Activated T-helper 2 cell treated with anti-CD3 and anti-CD28 coated beads, Interferon-gamma antibody, Interleukin-2, Interleukin-4, amounts not matched to agents 10 μg/mL and 5 μg/mL and 100 μg/mL, durations not matched to agents 14 hours and 24 hours and 36 hours (primary cell): ENCODE measurements at regions of chr15 and their contacts with region 1.

Region 1: DNA sequence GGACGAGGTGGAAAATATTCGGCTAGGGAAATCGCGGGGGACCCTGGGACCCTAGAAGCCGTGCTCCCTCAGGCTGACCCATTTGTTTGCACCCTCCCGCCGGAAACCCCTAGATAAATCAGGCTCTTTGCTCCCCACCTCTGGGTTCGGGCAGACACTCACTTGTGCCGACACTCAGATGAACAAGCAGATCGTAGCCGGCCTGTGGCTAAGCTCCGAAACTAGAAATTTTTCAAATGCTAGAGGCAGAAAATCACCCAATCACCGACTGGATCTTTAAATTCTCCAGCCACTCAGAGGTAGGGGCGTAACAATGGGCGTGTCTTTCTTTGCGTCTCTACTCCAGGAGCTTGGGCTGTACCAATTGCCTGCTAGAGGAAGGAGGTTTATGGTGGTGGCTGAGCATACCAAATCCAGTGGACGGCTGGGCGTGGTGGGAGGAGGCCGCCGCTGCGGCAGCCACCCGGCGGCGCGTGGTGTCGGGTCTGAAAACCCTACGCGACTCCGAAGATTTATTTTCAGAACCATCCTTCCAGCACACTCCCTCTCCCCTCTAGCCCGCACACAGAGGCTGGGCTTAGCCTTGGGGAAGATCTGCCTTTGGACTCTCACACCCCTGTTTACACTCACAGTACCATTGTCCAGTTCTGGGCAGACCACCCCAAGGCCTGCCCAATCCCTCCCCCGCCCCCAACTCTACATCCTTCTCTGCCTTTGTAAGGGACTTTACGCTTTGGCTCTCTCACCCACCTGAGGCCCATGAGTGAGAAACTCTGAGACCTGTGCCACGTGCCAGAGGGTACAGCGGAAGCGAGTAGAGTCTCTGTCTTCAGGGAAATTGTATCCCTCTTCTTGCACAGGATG is at the start of gene PIF1:
- DNase-seq: peak; percentile 93
- H3K4me3 Mint-ChIP-seq: peak within 1 kb of the TSS; percentile 94
- H3K27ac Mint-ChIP-seq: peak within 1 kb of the TSS; percentile 88
- H3K4me1 Mint-ChIP-seq: peaks cover 34% of the 10 kb centered on the region
- H3K27me3 Mint-ChIP-seq: no peaks in the 10 kb centered on the region
- total RNA-seq, gene PIF1: 28.1 and 29.2 TPM in 2 replicates

Region 2: GRCh38 chr15:64162870-64163658 is 662.6 kb before region 1 on chr15 and contains the start of gene PPIB:
- intact Hi-C with region 1: no loop called
- DNase-seq: peak; percentile 98
- H3K4me3 Mint-ChIP-seq: peak within 1 kb of the TSS; percentile 89
- H3K27ac Mint-ChIP-seq: peak within 1 kb of the TSS; percentile 97
- H3K4me1 Mint-ChIP-seq: peaks cover 40% of the 10 kb centered on the region
- H3K27me3 Mint-ChIP-seq: no peaks in the 10 kb centered on the region
- total RNA-seq, gene PPIB: 457 and 465 TPM in 2 replicates

Region 3: DNA sequence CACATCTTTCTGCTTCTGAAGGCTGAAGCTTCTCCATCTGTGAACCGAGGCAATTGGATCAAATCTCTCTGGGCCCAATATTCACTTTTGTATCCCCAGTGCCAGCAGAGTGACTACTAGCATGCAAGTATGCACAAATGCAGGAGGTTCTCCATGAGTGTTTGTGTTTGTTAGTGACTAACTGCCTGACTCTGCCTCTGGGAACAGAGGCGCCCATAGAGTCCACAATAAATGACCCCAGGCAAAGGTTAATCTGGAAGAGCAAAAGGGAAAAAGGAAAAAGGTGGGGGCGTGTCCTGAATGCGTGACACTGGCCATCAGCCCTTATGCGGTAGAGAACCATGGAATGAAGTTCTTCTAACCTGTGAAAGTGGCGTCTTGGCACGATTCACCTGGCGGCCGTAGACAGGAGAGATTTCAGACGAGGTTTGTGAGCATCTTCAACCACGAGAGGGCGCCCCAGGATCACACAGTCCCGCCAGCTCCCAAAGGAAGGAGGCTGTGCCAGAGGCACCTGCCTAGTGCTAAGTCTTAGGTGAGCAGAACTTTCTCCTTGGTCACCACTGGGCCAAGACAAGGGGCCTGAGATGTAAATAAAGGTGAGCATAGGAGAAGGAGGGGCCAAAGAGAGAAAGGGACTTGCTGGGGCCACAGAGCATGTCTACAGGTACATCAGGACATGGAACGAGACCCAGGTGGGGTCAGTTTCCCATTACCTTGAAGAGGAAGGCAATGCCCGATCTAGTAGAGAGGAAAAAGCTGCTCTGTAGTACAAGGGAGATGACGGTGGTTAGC is 94.5 kb before region 1 on chr15:
- intact Hi-C with region 1: no loop called
- DNase-seq: peak; percentile 72
- H3K4me3 Mint-ChIP-seq: no peak overlapping the region
- H3K27ac Mint-ChIP-seq: no peak overlapping the region
- H3K4me1 Mint-ChIP-seq: peaks cover 10% of the 10 kb centered on the region
- H3K27me3 Mint-ChIP-seq: peaks cover 2% of the 10 kb centered on the region

Region 4: DNA sequence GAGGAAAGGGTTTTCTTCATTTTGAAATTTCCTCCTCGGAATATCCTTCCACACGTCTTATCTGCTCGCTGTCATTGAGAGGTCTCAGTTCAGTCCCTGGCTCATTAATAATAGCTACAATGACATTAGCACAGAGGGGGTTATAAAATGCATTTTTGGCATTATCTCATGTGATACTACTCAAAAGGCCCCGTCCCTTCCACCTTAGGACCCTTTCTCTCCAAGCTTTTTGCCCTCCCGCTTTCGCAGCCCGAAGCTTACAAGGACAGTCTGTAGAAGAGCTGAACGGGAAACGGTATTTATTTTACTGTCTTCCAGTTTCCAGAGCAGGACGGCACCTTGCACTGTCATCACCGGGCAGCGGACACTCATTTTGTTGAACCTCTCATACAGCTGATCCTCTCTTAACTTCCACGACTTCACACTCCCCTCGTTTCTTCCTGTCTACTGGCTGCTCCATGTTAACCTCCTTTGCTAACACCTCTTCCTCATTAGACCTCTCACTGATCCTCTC is 10.4 kb after region 1 on chr15:
- intact Hi-C with region 1: loop called (anchors 1 kb)
- DNase-seq: no peak
- H3K4me3 Mint-ChIP-seq: peak overlapping the region; percentile 62
- H3K27ac Mint-ChIP-seq: peak overlapping the region; percentile 34
- H3K4me1 Mint-ChIP-seq: peaks cover 34% of the 10 kb centered on the region
- H3K27me3 Mint-ChIP-seq: no peaks in the 10 kb centered on the region

Region 5: GRCh38 chr15:64841258-64842095 is 15.8 kb after region 1 on chr15 and contains the start of gene PLEKHO2:
- intact Hi-C with region 1: loop called (anchors 2 kb)
- DNase-seq: peak; percentile 92
- H3K4me3 Mint-ChIP-seq: peak within 1 kb of the TSS; percentile 95
- H3K27ac Mint-ChIP-seq: peak within 1 kb of the TSS; percentile 83
- H3K4me1 Mint-ChIP-seq: peaks cover 49% of the 10 kb centered on the region
- H3K27me3 Mint-ChIP-seq: no peaks in the 10 kb centered on the region
- total RNA-seq, gene PLEKHO2: 15.3 and 17.0 TPM in 2 replicates

Region 6: GRCh38 chr15:64893481-64894394 is 68.1 kb after region 1 on chr15:
- intact Hi-C with region 1: loop called (anchors 1 kb)
- DNase-seq: peak; percentile 97
- H3K4me3 Mint-ChIP-seq: peak overlapping the region; percentile 86
- H3K27ac Mint-ChIP-seq: peak overlapping the region; percentile 96
- H3K4me1 Mint-ChIP-seq: peaks cover 62% of the 10 kb centered on the region
- H3K27me3 Mint-ChIP-seq: no peaks in the 10 kb centered on the region

Region 7: DNA sequence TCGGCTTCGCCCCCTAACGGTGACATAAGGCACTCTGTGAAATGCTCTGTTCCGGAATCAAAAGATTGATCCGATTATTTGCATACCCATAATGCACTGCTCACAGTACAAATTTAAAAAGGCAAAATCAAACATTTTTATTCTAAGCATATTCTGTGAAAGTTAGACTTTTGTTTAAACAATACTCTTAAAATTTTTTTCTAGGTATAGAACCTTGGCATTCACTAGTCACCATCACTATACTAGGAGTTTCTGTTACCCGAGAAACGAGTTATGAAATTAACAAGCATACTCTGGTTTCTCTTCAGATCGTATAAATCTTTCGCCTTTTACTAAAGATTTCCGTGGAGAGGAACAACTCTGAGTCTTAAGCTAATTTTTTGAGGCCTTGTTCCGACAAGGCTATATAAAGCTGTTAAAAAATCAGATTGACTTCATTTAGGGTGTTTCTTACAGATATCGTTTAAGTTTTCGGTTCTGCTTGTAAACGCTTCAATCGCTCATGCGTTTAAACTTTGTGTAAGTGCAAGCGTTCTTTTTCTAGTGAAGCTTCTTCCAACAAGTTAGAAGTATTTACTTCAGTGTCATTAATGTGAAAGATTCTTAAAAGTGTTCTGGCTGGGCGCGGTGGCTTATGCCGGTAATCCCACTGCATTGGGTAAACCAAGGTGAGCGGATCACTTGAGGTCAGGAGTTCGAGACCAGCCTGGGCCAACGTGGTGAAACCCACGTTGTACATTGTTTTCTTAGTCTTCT is 478.9 kb after region 1 on chr15 and contains the start of gene RNU5B-1:
- intact Hi-C with region 1: loop called (anchors 10 kb)
- DNase-seq: peak; percentile 85
- H3K4me3 Mint-ChIP-seq: peak within 1 kb of the TSS; percentile 87
- H3K27ac Mint-ChIP-seq: peak within 1 kb of the TSS; percentile 96
- H3K4me1 Mint-ChIP-seq: peaks cover 22% of the 10 kb centered on the region
- H3K27me3 Mint-ChIP-seq: no peaks in the 10 kb centered on the region
- total RNA-seq, gene RNU5B-1: not detected in 2 replicates